ENCODE measurements at regions of chr6 and their contacts with region 1.

Region 1: GRCh38 chr6:113306552-113307145 is 550.5 kb upstream of the MARCKS start:
- DNase-seq: peak; percentile 35
- CTCF ChIP-seq: peak; percentile 71

Region 2: GRCh38 chr6:113271437-113271836 is 35.2 kb before region 1 on chr6:
- CTCF ChIA-PET with region 1: no interaction called
- POLR2A ChIA-PET with region 1: no interaction called
- DNase-seq: no peak
- CTCF ChIP-seq: no peak

Region 3: GRCh38 chr6:113292646-113293422 is 13.8 kb before region 1 on chr6:
- CTCF ChIA-PET with region 1: interaction called, 25 read pairs
- POLR2A ChIA-PET with region 1: no interaction called
- DNase-seq: peak; percentile 5
- CTCF ChIP-seq: no peak

Region 4: GRCh38 chr6:113340371-113340770 is 33.7 kb after region 1 on chr6:
- CTCF ChIA-PET with region 1: interaction called, 14 read pairs
- POLR2A ChIA-PET with region 1: no interaction called
- DNase-seq: no peak
- CTCF ChIP-seq: no peak

Region 5: GRCh38 chr6:113626475-113626874 is 319.8 kb after region 1 on chr6:
- CTCF ChIA-PET with region 1: interaction called, 15 read pairs
- POLR2A ChIA-PET with region 1: no interaction called
- DNase-seq: no peak
- CTCF ChIP-seq: no peak

Region 6: DNA sequence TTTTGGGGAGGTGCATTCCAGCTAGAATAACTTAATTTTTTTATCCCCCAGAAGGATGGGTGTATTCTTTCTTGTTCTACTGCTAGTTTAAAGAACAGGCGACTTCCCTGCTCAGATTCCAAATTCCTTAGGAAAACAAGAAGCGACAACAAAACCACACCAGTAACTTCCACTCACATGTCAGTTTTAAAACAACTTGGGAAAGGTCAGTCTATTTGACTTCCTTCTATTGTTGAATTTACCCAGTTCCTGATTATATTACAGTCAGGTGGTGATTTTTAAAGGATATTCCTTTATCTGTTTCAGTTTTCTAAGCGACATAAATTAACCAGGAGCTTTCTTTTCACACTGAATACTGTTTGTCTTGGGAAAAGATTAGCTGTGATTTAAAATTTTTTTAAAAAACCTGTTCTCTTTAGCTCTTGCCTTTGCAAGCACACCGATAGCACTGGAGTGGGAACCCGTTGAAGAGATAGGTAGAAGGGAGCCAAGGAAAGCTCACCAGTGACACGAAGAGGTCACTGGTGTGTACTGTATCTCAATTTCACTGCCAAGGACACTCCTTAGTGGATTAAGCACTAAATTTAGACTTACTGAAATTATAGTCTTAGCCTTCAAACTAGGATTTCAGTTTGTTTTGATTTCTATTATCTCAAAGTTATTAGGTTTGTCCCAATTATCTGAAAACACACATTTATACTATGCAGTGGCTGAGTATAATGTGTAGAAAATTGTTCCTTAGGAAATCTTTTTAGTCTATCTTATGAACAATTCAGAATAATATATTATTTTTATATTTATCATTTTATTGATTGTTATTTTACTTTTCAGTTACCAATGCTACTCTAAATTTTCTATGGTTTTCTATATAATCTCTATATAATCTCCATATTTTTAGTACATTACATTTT is 572.8 kb after region 1 on chr6:
- CTCF ChIA-PET with region 1: interaction called, 49 read pairs
- POLR2A ChIA-PET with region 1: no interaction called
- DNase-seq: peak; percentile 52
- CTCF ChIP-seq: peak; percentile 81

Region 7: DNA sequence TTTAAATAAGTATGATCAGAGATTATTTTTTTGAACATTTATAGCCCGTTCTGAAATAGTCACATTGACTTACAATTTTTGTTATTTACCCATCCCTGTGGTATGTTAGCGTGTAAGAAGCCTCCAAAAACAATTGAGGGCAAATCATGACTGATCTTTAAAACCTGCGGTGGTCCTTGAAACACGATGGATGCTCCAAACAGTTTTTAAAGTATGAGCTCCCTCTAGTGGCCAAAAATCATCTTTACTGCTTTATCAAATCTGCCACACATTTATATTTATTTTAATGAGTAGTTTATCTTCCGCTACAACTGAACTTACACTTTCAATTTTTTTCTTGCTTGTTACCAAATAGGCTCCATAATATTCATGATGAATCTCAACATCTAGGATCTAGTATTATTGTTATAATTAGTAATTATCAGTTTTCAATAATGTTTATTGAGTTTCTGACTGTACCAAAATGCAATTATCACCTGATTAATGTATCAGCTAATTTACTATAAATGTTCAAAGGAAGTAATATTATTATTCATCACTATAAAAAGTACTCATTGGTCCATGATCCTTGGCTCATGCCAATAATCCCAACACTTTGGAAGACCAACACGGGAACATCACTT is 602.7 kb after region 1 on chr6:
- CTCF ChIA-PET with region 1: interaction called, 10 read pairs
- POLR2A ChIA-PET with region 1: no interaction called
- DNase-seq: peak; percentile 60
- CTCF ChIP-seq: peak; percentile 33